CD4-positive, alpha-beta memory T cell (primary cell): ENCODE measurements at regions of chr12 and their contacts with region 1.

Region 1: DNA sequence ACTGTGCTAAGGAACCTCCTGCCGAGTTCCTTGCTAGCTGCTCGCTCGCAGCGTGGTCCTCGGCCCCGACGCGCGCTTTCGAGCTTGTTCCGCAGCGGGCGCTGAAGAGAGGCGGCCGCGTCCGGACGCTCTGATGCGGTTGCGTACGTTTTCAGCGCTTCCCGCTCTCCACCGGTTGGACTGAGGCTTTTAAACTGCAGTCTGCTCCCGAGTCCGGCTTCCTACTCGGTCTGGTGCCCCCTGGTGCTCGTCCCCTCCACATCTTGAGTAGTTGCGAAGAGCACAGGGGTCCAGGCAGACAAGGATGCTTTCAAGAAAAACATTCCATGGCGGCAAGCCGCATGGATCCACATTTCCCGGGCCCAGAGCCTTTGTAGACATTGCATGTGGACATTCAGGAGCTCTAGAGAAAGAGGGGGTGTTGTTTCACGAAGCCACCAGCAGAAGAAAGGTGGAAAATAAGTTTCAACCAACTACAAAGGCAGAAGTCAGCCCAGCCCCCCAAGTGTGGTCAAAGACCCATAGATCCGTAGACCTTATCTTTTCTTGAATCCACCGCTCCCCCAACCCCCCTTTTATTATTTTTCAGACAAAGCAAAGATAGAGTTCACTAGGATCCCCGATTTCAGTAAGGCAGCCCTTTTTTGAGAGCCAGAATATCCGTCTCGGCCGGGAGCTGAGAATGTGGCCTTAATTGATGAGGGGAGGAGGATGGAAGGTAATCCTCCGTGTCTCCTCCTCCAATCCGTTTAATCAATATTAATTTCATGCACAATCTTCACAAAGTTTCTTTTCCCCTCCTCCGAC is 984 bp upstream of the WNK1 start:
- DNase-seq: peak; percentile 77 to 83 (median 78)
- H3K4me3 ChIP-seq: peak overlapping the region; percentile 67 to 96
- H3K4me3 Mint-ChIP-seq: no peak overlapping the region
- H3K27ac ChIP-seq: peak overlapping the region; percentile 89
- H3K27ac Mint-ChIP-seq: no peak overlapping the region
- H3K4me1 ChIP-seq: peaks cover 33% of the 10 kb centered on the region
- H3K4me1 Mint-ChIP-seq: peaks cover 2 to 15% (median 12%) of the 10 kb centered on the region in 4 donors
- H3K27me3 ChIP-seq: no peaks in the 10 kb centered on the region
- H3K27me3 Mint-ChIP-seq: no peaks in the 10 kb centered on the region

Region 2: GRCh38 chr12:510071-510825 is 241.1 kb before region 1 on chr12:
- CTCF ChIA-PET with region 1: no interaction called
- POLR2A ChIA-PET with region 1: no interaction called
- intact Hi-C with region 1: no loop called
- DNase-seq: no peak
- H3K4me3 ChIP-seq: no peak overlapping the region
- H3K4me3 Mint-ChIP-seq: no peak overlapping the region
- H3K27ac ChIP-seq: no peak overlapping the region
- H3K27ac Mint-ChIP-seq: no peak overlapping the region
- H3K4me1 ChIP-seq: no peaks in the 10 kb centered on the region
- H3K4me1 Mint-ChIP-seq: peaks cover 0 to 4% (median 0%) of the 10 kb centered on the region in 4 donors
- H3K27me3 ChIP-seq: no peaks in the 10 kb centered on the region
- H3K27me3 Mint-ChIP-seq: peaks cover 0 to 4% of the 10 kb centered on the region in 2 donors

Region 3: GRCh38 chr12:563250-563781 is 188.1 kb before region 1 on chr12:
- CTCF ChIA-PET with region 1: interaction called, 9 read pairs
- POLR2A ChIA-PET with region 1: interaction called, 26 read pairs
- intact Hi-C with region 1: no loop called
- DNase-seq: peak; percentile 74 to 81 (median 78)
- H3K4me3 ChIP-seq: peak overlapping the region; percentile 44 to 51
- H3K4me3 Mint-ChIP-seq: peak overlapping the region; percentile 79 to 93 (median 86)
- H3K27ac ChIP-seq: peak overlapping the region; percentile 71
- H3K27ac Mint-ChIP-seq: peak overlapping the region; percentile 88 to 97 (median 93)
- H3K4me1 ChIP-seq: peaks cover 60% of the 10 kb centered on the region
- H3K4me1 Mint-ChIP-seq: peaks cover 55 to 83% (median 69%) of the 10 kb centered on the region in 4 donors
- H3K27me3 ChIP-seq: no peaks in the 10 kb centered on the region
- H3K27me3 Mint-ChIP-seq: no peaks in the 10 kb centered on the region

Region 4: GRCh38 chr12:630656-631632 is 120.5 kb before region 1 on chr12:
- CTCF ChIA-PET with region 1: interaction called, 35 read pairs
- POLR2A ChIA-PET with region 1: interaction called, 71 read pairs
- intact Hi-C with region 1: no loop called
- DNase-seq: peak in 3 of 5 donors; percentile 66 to 81 (median 68)
- H3K4me3 ChIP-seq: peak overlapping the region in 1 of 2 donors; percentile 68
- H3K4me3 Mint-ChIP-seq: peak overlapping the region in 6 of 8 donors; percentile 92 to 98 (median 93)
- H3K27ac ChIP-seq: peak overlapping the region; percentile 76
- H3K27ac Mint-ChIP-seq: peak overlapping the region in 5 of 7 donors; percentile 86 to 99 (median 95)
- H3K4me1 ChIP-seq: peaks cover 15% of the 10 kb centered on the region
- H3K4me1 Mint-ChIP-seq: peaks cover 4 to 28% (median 18%) of the 10 kb centered on the region in 4 donors
- H3K27me3 ChIP-seq: no peaks in the 10 kb centered on the region
- H3K27me3 Mint-ChIP-seq: no peaks in the 10 kb centered on the region

Region 5: GRCh38 chr12:674272-674781 is 77.1 kb before region 1 on chr12:
- CTCF ChIA-PET with region 1: interaction called, 43 read pairs
- POLR2A ChIA-PET with region 1: interaction called, 64 read pairs
- intact Hi-C with region 1: loop called (anchors 2 kb)
- DNase-seq: peak; percentile 77 to 91 (median 83)
- H3K4me3 ChIP-seq: peak overlapping the region; percentile 27 to 44
- H3K4me3 Mint-ChIP-seq: peak overlapping the region; percentile 67 to 91 (median 84)
- H3K27ac ChIP-seq: peak overlapping the region; percentile 70
- H3K27ac Mint-ChIP-seq: peak overlapping the region; percentile 93 to 100 (median 99)
- H3K4me1 ChIP-seq: peaks cover 61% of the 10 kb centered on the region
- H3K4me1 Mint-ChIP-seq: peaks cover 36 to 67% (median 53%) of the 10 kb centered on the region in 4 donors
- H3K27me3 ChIP-seq: no peaks in the 10 kb centered on the region
- H3K27me3 Mint-ChIP-seq: no peaks in the 10 kb centered on the region

Region 6: DNA sequence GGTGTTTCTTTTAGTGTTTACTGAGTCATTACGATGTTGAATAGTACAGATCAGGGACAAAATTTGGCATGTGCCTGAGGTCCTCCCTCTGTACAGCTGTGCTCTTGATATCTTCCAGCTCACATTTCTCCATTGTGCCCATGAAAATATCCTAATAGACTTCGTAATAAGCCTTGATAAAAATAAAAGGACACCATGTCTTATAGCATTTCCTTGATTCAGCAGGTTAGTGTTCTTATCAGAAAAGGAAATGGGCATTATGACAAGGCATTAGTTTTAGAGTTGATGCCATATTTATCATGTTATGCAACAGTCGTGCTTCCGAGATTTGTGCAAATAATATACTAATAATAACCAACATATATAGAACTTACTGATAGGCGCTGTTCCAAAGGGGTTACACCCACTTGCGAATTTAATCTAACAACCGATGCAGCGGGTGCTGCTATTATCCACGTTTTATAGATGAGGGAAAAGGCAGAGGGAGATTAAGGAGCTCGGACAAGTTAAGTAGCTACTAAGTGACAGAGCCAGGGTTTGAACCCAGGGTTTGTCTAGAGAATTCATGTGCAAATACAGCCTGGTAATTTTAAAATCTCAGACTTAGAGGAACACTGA is 14.2 kb before region 1 on chr12:
- CTCF ChIA-PET with region 1: interaction called, 29 read pairs
- POLR2A ChIA-PET with region 1: interaction called, 138 read pairs
- intact Hi-C with region 1: no loop called
- DNase-seq: no peak
- H3K4me3 ChIP-seq: no peak overlapping the region
- H3K4me3 Mint-ChIP-seq: no peak overlapping the region
- H3K27ac ChIP-seq: no peak overlapping the region
- H3K27ac Mint-ChIP-seq: no peak overlapping the region
- H3K4me1 ChIP-seq: no peaks in the 10 kb centered on the region
- H3K4me1 Mint-ChIP-seq: peaks cover 0 to 3% (median under 1%) of the 10 kb centered on the region in 4 donors
- H3K27me3 ChIP-seq: no peaks in the 10 kb centered on the region
- H3K27me3 Mint-ChIP-seq: peaks cover 0 to 2% of the 10 kb centered on the region in 2 donors

Region 7: GRCh38 chr12:795305-795704 is 43.9 kb after region 1 on chr12:
- CTCF ChIA-PET with region 1: interaction called, 6 read pairs
- POLR2A ChIA-PET with region 1: interaction called, 14 read pairs
- intact Hi-C with region 1: loop called (anchors 5 kb)
- DNase-seq: peak; percentile 27 to 70 (median 37)
- H3K4me3 ChIP-seq: no peak overlapping the region
- H3K4me3 Mint-ChIP-seq: peak overlapping the region in 7 of 8 donors; percentile 48 to 69 (median 52)
- H3K27ac ChIP-seq: no peak overlapping the region
- H3K27ac Mint-ChIP-seq: peak overlapping the region; percentile 43 to 88 (median 83)
- H3K4me1 ChIP-seq: peaks cover 75% of the 10 kb centered on the region
- H3K4me1 Mint-ChIP-seq: peaks cover 49 to 84% (median 68%) of the 10 kb centered on the region in 4 donors
- H3K27me3 ChIP-seq: no peaks in the 10 kb centered on the region
- H3K27me3 Mint-ChIP-seq: no peaks in the 10 kb centered on the region

Region 8: GRCh38 chr12:1138691-1139090 is 387.3 kb after region 1 on chr12:
- CTCF ChIA-PET with region 1: no interaction called
- POLR2A ChIA-PET with region 1: no interaction called
- intact Hi-C with region 1: no loop called
- DNase-seq: no peak
- H3K4me3 ChIP-seq: no peak overlapping the region
- H3K4me3 Mint-ChIP-seq: no peak overlapping the region
- H3K27ac ChIP-seq: no peak overlapping the region
- H3K27ac Mint-ChIP-seq: peak overlapping the region in 1 of 7 donors; percentile 64
- H3K4me1 ChIP-seq: no peaks in the 10 kb centered on the region
- H3K4me1 Mint-ChIP-seq: peaks cover 0 to 3% (median 1%) of the 10 kb centered on the region in 4 donors
- H3K27me3 ChIP-seq: no peaks in the 10 kb centered on the region
- H3K27me3 Mint-ChIP-seq: no peaks in the 10 kb centered on the region

Region 9: GRCh38 chr12:1398673-1399072 is 647.3 kb after region 1 on chr12:
- CTCF ChIA-PET with region 1: no interaction called
- POLR2A ChIA-PET with region 1: no interaction called
- intact Hi-C with region 1: no loop called
- DNase-seq: no peak
- H3K4me3 ChIP-seq: no peak overlapping the region
- H3K4me3 Mint-ChIP-seq: no peak overlapping the region
- H3K27ac ChIP-seq: no peak overlapping the region
- H3K27ac Mint-ChIP-seq: peak overlapping the region in 1 of 7 donors; percentile 19
- H3K4me1 ChIP-seq: no peaks in the 10 kb centered on the region
- H3K4me1 Mint-ChIP-seq: no peaks in the 10 kb centered on the region
- H3K27me3 ChIP-seq: no peaks in the 10 kb centered on the region
- H3K27me3 Mint-ChIP-seq: no peaks in the 10 kb centered on the region

Region 10: GRCh38 chr12:1594261-1595025 is 843.0 kb after region 1 on chr12 and contains the start of gene FBXL14:
- CTCF ChIA-PET with region 1: interaction called, 3 read pairs
- POLR2A ChIA-PET with region 1: interaction called, 12 read pairs
- intact Hi-C with region 1: loop called (anchors 1 kb)
- DNase-seq: peak; percentile 91 to 93 (median 92)
- H3K4me3 ChIP-seq: peak within 1 kb of the TSS; percentile 77 to 95
- H3K4me3 Mint-ChIP-seq: peak within 1 kb of the TSS; percentile 92 to 96 (median 94)
- H3K27ac ChIP-seq: peak within 1 kb of the TSS; percentile 68
- H3K27ac Mint-ChIP-seq: peak within 1 kb of the TSS; percentile 92 to 99 (median 98)
- H3K4me1 ChIP-seq: peaks cover 42% of the 10 kb centered on the region
- H3K4me1 Mint-ChIP-seq: peaks cover 34 to 68% (median 42%) of the 10 kb centered on the region in 4 donors
- H3K27me3 ChIP-seq: no peaks in the 10 kb centered on the region
- H3K27me3 Mint-ChIP-seq: no peaks in the 10 kb centered on the region
- total RNA-seq, gene FBXL14: 41.6 to 43.4 TPM